Dendritic cell treated with granulocyte-macrophage colony-stimulating factor and Interleukin-4, amounts not matched to agents 40 ng/mL and 50 ng/mL, for 4 days (primary cell): ENCODE measurements at regions of chr6 and their contacts with region 1.

Region 1: GRCh38 chr6:56851541-56852259 is 103.2 kb upstream of the BEND6 start:
- H3K4me3 Mint-ChIP-seq: peak overlapping the region; percentile 55
- H3K27ac Mint-ChIP-seq: peak overlapping the region; percentile 20
- H3K4me1 Mint-ChIP-seq: peaks cover 14% of the 10 kb centered on the region
- H3K27me3 Mint-ChIP-seq: peaks cover 17% of the 10 kb centered on the region

Region 2: GRCh38 chr6:56292505-56293181 is 559.1 kb before region 1 on chr6:
- intact Hi-C with region 1: no loop called
- H3K4me3 Mint-ChIP-seq: no peak overlapping the region
- H3K27ac Mint-ChIP-seq: no peak overlapping the region
- H3K4me1 Mint-ChIP-seq: no peaks in the 10 kb centered on the region
- H3K27me3 Mint-ChIP-seq: no peaks in the 10 kb centered on the region

Region 3: GRCh38 chr6:56637640-56638039 is 214.1 kb before region 1 on chr6:
- intact Hi-C with region 1: loop called (anchors 2 kb)
- H3K4me3 Mint-ChIP-seq: no peak overlapping the region
- H3K27ac Mint-ChIP-seq: no peak overlapping the region
- H3K4me1 Mint-ChIP-seq: no peaks in the 10 kb centered on the region
- H3K27me3 Mint-ChIP-seq: no peaks in the 10 kb centered on the region

Region 4: GRCh38 chr6:56708810-56709597 is 142.7 kb before region 1 on chr6:
- intact Hi-C with region 1: loop called (anchors 2 kb)
- H3K4me3 Mint-ChIP-seq: no peak overlapping the region
- H3K27ac Mint-ChIP-seq: peak overlapping the region; percentile 56
- H3K4me1 Mint-ChIP-seq: peaks cover 7% of the 10 kb centered on the region
- H3K27me3 Mint-ChIP-seq: no peaks in the 10 kb centered on the region

Region 5: DNA sequence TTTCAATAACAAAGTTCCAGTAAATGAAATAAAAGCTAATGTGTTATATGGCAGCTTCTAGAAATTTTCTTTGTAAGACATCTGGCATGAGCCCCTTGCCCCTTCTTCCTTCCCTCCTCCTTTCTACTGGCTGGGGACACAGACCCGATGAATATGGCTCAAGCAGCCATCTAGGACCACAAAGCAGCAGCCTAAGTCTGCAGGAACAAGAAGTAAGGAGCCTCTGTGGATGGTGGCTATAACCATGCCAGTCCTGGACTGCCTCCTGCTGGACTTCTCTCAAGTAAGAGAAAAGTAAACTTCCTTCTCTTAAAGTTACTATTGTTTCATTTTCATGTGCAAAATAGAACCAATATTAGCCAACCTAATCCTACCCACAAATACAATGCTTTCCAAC is 94.1 kb before region 1 on chr6:
- intact Hi-C with region 1: loop called (anchors 5 kb)
- H3K4me3 Mint-ChIP-seq: no peak overlapping the region
- H3K27ac Mint-ChIP-seq: no peak overlapping the region
- H3K4me1 Mint-ChIP-seq: peaks cover 26% of the 10 kb centered on the region
- H3K27me3 Mint-ChIP-seq: no peaks in the 10 kb centered on the region

Region 6: GRCh38 chr6:56814308-56814707 is 37.4 kb before region 1 on chr6:
- intact Hi-C with region 1: no loop called
- H3K4me3 Mint-ChIP-seq: no peak overlapping the region
- H3K27ac Mint-ChIP-seq: no peak overlapping the region
- H3K4me1 Mint-ChIP-seq: no peaks in the 10 kb centered on the region
- H3K27me3 Mint-ChIP-seq: no peaks in the 10 kb centered on the region

Region 7: GRCh38 chr6:56827908-56828649 is 23.6 kb before region 1 on chr6:
- intact Hi-C with region 1: no loop called
- H3K4me3 Mint-ChIP-seq: no peak overlapping the region
- H3K27ac Mint-ChIP-seq: no peak overlapping the region
- H3K4me1 Mint-ChIP-seq: no peaks in the 10 kb centered on the region
- H3K27me3 Mint-ChIP-seq: no peaks in the 10 kb centered on the region

Region 8: DNA sequence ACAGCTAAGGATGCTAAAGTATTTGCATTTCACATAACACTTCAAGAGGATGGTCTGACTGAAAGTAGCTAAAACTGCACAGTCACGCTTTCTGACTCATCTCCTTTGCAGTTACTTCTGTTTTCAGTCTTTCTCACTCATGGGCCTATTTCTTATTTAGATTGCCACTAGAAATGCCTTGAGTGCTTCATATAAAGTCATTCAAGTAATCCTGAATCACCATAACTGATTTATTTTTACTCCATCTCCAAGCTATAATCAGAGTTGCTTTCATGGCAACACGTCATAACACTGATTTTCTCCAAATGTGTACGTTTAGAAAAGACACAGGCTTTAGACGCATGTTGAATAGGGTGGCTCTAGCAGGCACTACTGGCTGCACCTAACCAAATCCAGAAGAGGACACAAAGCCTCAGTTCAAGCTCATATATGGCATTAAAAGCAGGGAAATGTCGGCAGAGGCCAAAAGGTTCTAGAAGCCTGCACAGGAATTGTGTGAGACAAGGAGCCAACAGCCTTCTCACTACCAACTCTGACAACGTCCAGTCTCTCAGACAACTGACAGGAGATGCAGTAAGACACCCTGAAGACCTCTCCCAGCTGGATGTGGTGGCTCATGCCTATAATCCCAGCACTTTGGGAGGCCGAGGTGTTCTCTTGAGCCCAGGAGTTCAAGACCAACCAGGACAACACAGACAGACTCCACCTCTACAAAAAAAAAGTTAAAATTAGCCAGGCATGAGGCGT is 39.2 kb after region 1 on chr6:
- intact Hi-C with region 1: no loop called
- H3K4me3 Mint-ChIP-seq: no peak overlapping the region
- H3K27ac Mint-ChIP-seq: peak overlapping the region; percentile 41
- H3K4me1 Mint-ChIP-seq: peaks cover 14% of the 10 kb centered on the region
- H3K27me3 Mint-ChIP-seq: no peaks in the 10 kb centered on the region